ENCODE measurements at regions of chr1 and their contacts with region 1.

Region 1: DNA sequence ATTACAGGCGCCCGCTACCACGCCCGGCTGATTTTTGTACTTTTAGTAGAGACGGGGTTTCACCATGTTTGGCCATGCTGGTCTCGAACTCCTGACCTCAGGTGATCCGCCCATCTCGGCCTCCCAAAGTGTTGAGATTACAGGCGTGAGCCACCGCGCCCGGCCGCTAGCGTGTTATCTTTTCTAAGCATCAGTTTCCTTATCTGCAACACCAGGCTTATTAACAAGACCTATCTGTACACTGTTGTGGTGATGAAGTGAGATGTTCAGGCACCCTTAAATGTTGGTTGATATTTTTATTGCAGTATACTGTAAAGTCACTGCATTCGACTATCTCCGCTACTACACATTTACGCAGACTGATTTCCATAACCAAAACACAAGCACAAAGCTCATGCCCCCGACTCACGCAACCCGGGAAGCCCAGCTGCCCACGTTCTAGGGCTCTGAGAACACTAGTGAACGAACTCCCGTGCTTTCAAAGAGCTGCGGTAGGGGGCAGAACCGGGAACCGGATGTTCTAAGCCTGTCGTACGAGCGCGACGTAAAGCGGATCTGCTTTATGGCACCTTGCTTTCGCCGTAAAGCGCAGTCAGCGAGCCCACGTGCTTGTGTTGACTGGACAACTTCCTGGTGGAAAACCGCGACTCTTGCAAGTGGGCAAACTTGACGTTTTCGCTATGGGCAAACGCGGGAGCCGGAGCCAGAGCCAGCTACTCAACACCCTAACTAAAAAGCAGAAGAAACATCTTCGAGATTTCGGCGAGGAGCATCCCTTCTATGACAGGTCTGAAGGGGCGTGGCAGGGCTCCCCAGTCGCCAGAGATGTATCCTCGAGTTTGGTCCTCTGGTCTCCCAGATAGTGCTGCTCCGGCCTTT is at the start of gene UTP25:
- DNase-seq: peak; percentile 98
- H3K4me3 Mint-ChIP-seq: peak within 1 kb of the TSS; percentile 93
- H3K27ac Mint-ChIP-seq: peak within 1 kb of the TSS; percentile 86
- H3K4me1 Mint-ChIP-seq: peaks cover 43% of the 10 kb centered on the region
- H3K27me3 Mint-ChIP-seq: peaks cover 4% of the 10 kb centered on the region
- total RNA-seq, gene UTP25: 17.2 and 17.6 TPM in 2 replicates

Region 2: GRCh38 chr1:209755926-209756614 is 71.6 kb before region 1 on chr1 and contains the start of gene TRAF3IP3:
- intact Hi-C with region 1: loop called (anchors 1 kb)
- DNase-seq: peak; percentile 94
- H3K4me3 Mint-ChIP-seq: peak within 1 kb of the TSS; percentile 94
- H3K27ac Mint-ChIP-seq: peak within 1 kb of the TSS; percentile 98
- H3K4me1 Mint-ChIP-seq: peaks cover 69% of the 10 kb centered on the region
- H3K27me3 Mint-ChIP-seq: no peaks in the 10 kb centered on the region
- total RNA-seq, gene TRAF3IP3: 392 and 394 TPM in 2 replicates